ENCODE measurements at regions of chr17 and their contacts with region 1.

Region 1: GRCh38 chr17:903981-904481 is 75.5 kb downstream of the NXN start:
- DNase-seq: no peak
- ATAC-seq: no peak
- H3K4me3 ChIP-seq: no peak overlapping the region
- H3K27ac ChIP-seq: peak overlapping the region; percentile 0 to 100 (median 97)
- H3K4me1 ChIP-seq: peaks cover 24 to 25% of the 10 kb centered on the region in 2 donors
- H3K27me3 ChIP-seq: no peaks in the 10 kb centered on the region
- CTCF ChIP-seq: no peak
- POLR2A ChIP-seq: no peak

Region 2: DNA sequence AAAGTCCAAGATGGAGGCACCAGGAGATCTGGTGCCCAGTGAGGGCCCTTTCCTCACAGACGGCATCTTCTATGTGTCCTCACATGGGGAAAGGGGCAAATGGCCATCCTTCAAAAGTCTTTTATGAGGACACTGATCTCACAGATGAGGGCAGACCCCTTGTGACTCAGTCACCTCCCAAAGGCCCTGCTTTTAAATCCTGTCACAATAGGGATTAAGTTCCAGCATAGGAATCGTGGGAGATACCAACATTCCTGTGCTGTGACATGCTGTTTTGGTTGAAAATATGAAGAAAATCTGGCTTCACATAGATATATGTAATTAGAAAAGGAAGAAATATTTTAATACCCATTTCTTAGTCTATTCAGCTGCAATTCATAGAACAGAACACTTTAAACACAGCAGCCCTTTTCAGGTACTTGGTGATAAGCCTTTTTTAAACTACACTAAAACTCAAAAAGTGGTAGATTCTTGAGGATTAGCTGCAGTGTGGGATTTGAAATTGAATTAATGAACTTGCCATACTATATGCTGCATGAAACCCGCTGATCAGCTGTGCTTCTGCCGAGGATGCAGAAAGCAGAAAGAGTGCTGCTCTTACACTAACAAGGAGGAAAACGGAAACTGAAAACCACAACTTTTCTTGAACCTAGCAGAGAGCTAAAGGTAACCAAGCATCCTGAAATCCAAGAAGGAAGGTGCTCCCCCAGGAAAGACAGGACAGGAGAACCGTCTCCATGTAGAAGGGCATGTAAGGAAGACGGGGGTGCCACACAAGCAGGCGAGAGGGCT is 222.1 kb before region 1 on chr17:
- in situ Hi-C with region 1: no loop called
- intact Hi-C with region 1: no loop called
- DNase-seq: no peak
- ATAC-seq: no peak
- H3K4me3 ChIP-seq: no peak overlapping the region
- H3K27ac ChIP-seq: no peak overlapping the region
- H3K4me1 ChIP-seq: no peaks in the 10 kb centered on the region
- H3K27me3 ChIP-seq: no peaks in the 10 kb centered on the region
- CTCF ChIP-seq: no peak
- POLR2A ChIP-seq: no peak

Region 3: DNA sequence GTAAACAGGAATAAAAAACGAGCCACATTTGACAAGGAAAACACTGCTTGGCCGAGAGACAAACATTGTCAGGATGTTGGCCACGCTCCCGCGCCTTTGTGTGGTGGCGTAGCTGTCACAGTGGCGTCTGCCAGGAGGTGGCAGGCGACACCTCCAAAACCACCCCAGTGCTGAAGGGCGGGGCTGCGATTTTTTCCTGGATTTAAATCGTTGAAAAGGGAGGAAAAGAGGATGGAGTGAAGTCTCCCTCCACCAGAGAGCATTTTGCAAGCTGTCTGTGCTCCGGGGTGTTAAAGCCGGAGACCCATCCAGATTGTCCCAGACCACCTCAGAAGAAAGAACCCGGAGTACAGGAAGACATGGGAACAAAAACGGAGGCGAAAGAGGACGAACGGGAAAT is 109.2 kb before region 1 on chr17:
- in situ Hi-C with region 1: no loop called
- intact Hi-C with region 1: loop called (anchors 2 kb)
- DNase-seq: peak; percentile 79 to 82
- ATAC-seq: peak; percentile 76 to 80
- H3K4me3 ChIP-seq: peak overlapping the region; percentile 27 to 74 (median 51)
- H3K27ac ChIP-seq: peak overlapping the region; percentile 67 to 78 (median 74)
- H3K4me1 ChIP-seq: peaks cover 27 to 30% of the 10 kb centered on the region in 2 donors
- H3K27me3 ChIP-seq: no peaks in the 10 kb centered on the region
- CTCF ChIP-seq: peak; percentile 90 to 96 (median 92)
- POLR2A ChIP-seq: no peak

Region 4: DNA sequence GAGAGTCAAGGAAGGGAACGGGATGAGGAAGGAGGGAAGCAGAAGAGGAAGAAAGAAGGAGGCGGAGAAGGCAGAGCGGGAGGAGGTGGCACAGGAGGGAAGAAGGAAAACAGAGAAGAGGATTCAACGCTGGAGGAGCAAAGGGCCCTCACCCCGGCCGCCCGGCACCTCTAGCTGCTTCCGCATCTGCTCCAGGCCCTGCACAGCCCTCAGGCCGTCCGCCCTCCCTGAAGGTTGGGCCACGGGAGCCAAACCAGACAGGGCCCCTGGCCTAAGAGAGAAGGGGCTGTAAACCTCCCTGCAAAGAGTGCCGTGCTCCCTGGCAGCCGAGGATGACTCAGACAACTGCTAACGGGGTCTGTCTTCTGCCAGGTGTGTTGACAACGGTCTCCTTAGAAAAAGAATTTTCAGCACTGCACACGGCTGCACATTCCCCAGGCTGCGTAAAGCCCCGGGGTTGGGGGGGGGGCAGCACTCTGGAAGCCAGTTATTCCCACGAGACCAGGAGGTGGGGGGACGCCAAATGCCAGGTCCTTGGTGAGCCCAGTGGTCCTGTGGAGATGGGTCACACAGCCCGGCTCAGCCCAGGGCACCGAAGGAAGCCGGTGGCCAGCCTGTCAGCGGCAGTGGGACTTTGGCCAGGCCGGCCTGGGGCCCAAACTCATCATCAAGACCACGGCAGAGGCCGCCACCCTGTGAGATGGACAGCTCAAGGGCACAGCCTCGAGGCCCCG is 92.8 kb before region 1 on chr17:
- in situ Hi-C with region 1: no loop called
- intact Hi-C with region 1: loop called (anchors 5 kb)
- DNase-seq: no peak
- ATAC-seq: no peak
- H3K4me3 ChIP-seq: no peak overlapping the region
- H3K27ac ChIP-seq: no peak overlapping the region
- H3K4me1 ChIP-seq: peaks cover 5 to 9% of the 10 kb centered on the region in 2 donors
- H3K27me3 ChIP-seq: no peaks in the 10 kb centered on the region
- CTCF ChIP-seq: no peak
- POLR2A ChIP-seq: no peak

Region 5: DNA sequence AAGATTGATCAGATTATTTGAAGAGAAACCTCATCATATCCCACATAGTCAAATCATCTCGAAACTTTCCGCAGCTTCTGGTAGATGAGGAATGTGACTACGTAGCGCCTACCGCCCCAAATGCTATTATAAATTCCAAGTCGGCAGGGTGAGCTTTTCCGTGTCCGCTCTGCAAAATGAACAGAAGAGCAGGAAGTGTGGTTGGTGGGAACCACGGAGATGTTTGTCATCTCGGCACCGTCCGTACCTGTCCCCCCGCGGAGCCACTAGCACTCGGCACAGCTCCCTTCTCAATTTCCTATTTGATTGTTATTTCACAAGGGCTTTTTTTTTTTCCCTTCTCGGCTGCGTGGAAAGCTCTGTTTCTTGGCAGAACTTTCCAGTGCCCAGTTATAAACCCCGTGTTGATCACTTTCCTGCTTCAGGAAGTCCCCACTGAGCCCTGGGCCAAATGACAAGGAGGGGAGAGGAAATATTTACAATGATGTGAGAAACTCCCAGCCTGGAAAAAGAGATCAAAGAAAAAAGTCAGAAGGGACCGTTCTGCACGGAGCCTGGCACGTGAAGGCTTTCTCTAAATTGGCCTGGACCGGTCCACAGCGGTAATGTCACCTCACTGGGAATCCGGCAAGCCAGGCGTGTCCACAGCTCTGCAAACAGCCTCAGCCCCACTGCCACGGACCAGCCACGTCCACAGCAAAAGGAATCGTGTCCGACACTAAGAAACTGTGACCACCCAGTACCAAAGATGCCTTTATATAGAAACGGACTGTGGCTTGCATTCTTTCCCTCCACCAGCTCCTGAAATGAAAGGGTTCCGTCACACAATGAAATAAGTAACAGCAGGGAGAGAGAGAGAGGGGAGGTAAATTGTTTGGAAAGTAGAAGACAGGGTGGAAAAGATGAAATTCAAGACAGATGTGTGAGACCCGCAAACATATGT is 56.9 kb before region 1 on chr17:
- in situ Hi-C with region 1: no loop called
- intact Hi-C with region 1: no loop called
- DNase-seq: no peak
- ATAC-seq: no peak
- H3K4me3 ChIP-seq: peak overlapping the region in 3 of 4 donors; percentile 1 to 27 (median 15)
- H3K27ac ChIP-seq: peak overlapping the region; percentile 28 to 90 (median 87)
- H3K4me1 ChIP-seq: peaks cover 50 to 82% of the 10 kb centered on the region in 2 donors
- H3K27me3 ChIP-seq: no peaks in the 10 kb centered on the region
- CTCF ChIP-seq: no peak
- POLR2A ChIP-seq: no peak

Region 6: GRCh38 chr17:869567-870525 is 34.2 kb before region 1 on chr17:
- in situ Hi-C with region 1: no loop called
- intact Hi-C with region 1: loop called (anchors 1 kb)
- DNase-seq: peak; percentile 90 to 97
- ATAC-seq: peak; percentile 78
- H3K4me3 ChIP-seq: peak overlapping the region; percentile 24 to 55 (median 42)
- H3K27ac ChIP-seq: peak overlapping the region; percentile 92 to 99 (median 96)
- H3K4me1 ChIP-seq: peaks cover 35 to 38% of the 10 kb centered on the region in 2 donors
- H3K27me3 ChIP-seq: no peaks in the 10 kb centered on the region
- CTCF ChIP-seq: peak in 2 of 5 experiments; percentile 11
- POLR2A ChIP-seq: peak; percentile 69 to 75

Region 7: GRCh38 chr17:885971-886571 is 18.0 kb before region 1 on chr17:
- in situ Hi-C with region 1: no loop called
- intact Hi-C with region 1: loop called (anchors 2 kb)
- DNase-seq: peak; percentile 81 to 92
- ATAC-seq: peak; percentile 55 to 61
- H3K4me3 ChIP-seq: no peak overlapping the region
- H3K27ac ChIP-seq: peak overlapping the region; percentile 85 to 99 (median 94)
- H3K4me1 ChIP-seq: peaks cover 28 to 34% of the 10 kb centered on the region in 2 donors
- H3K27me3 ChIP-seq: no peaks in the 10 kb centered on the region
- CTCF ChIP-seq: no peak
- POLR2A ChIP-seq: no peak

Region 8: GRCh38 chr17:954431-955164 is 50.6 kb after region 1 on chr17:
- in situ Hi-C with region 1: no loop called
- intact Hi-C with region 1: loop called (anchors 1 kb)
- DNase-seq: peak in 1 of 2 donors; percentile 31
- ATAC-seq: no peak
- H3K4me3 ChIP-seq: no peak overlapping the region
- H3K27ac ChIP-seq: peak overlapping the region; percentile 65 to 91 (median 88)
- H3K4me1 ChIP-seq: peaks cover 31 to 48% of the 10 kb centered on the region in 2 donors
- H3K27me3 ChIP-seq: no peaks in the 10 kb centered on the region
- CTCF ChIP-seq: no peak
- POLR2A ChIP-seq: no peak

Region 9: GRCh38 chr17:1031711-1032110 is 127.7 kb after region 1 on chr17:
- in situ Hi-C with region 1: no loop called
- intact Hi-C with region 1: no loop called
- DNase-seq: no peak
- ATAC-seq: no peak
- H3K4me3 ChIP-seq: peak overlapping the region in 3 of 4 donors; percentile 17 to 47 (median 42)
- H3K27ac ChIP-seq: peak overlapping the region in 3 of 4 donors; percentile 60 to 78 (median 68)
- H3K4me1 ChIP-seq: peaks cover 25 to 36% of the 10 kb centered on the region in 2 donors
- H3K27me3 ChIP-seq: no peaks in the 10 kb centered on the region
- CTCF ChIP-seq: no peak
- POLR2A ChIP-seq: no peak

Measured in gastrocnemius medialis (tissue), 4 donors.